Activated naive CD4-positive, alpha-beta T cell treated with anti-CD3 and anti-CD28 coated beads for 36 hours (primary cell): ENCODE measurements at regions of chrX and their contacts with region 1.

Region 1: DNA sequence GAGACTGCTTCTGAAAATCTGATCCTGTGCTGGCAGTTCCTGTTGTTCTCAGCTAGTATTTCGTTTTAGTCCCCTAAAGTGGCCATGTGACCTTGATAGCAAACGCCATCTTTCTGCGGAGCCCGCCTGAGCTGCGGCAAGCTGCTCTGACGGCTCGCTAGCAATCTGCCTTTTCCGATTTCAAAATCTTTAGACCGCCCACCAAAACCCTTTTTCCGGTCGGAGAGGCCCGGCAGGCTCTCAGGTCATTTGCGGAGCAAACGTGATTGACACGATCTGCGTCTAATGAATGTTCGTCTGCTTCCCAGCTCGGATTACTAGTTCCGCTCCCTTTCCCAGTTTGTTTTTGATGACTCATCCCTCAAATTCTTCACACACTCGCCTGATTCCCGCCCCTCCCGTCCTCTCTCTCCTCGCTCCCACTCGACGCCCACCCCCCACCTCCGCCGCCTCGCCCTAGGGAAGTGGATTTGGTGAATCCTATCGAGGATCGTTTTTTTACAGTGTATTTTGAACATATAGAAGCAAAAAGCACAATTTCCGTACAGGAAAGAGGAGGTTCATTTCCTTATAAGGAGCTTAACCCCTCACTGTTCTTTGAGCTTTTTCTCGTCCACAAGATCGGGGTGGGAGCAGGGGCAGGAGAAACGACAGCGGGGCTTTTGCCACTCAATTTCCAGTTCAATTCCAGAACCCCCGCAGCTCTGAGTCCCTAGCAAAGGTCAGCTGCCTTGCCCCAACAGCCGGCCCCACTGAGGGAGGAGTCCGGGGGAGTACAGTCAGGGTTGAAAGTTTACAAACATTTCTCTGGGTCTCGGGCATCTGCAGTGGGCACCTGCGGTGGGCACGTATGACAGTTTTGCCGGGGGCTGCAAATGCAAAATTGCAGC is 37.5 kb downstream of the NLGN3 start:
- DNase-seq: peak; percentile 91
- H3K4me3 Mint-ChIP-seq: peak overlapping the region; percentile 90
- H3K27ac Mint-ChIP-seq: peak overlapping the region; percentile 99
- H3K4me1 Mint-ChIP-seq: peaks cover 18% of the 10 kb centered on the region
- H3K27me3 Mint-ChIP-seq: no peaks in the 10 kb centered on the region

Region 2: DNA sequence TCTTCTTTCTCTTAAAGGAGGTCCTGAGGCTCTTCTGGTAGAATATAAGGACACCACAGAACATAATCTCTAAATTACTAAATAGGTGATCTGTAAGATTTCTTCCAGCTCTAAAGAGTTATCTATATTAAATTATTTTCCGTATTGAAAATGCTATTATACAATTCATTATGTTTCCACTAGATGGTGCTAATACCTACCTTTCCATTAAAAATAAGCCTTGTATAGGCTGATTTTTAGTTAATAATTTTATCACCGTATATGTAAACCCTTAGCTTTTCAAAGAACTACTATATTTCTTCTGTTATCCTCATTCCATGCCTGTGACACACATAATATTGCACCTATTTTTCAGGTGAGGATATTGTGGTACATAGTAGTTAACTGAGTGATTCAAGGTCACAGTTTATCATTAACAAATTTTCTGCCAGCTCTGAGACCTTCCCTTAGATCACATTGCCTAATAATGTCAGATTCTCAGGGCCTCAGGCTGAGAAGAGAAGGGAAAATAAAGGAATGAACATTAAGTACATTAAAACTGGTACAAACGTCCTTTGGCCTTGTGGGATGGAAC is 412.4 kb before region 1 on chrX:
- CTCF ChIA-PET with region 1: no interaction called
- intact Hi-C with region 1: loop called (anchors 2 kb)
- DNase-seq: no peak
- H3K4me3 Mint-ChIP-seq: no peak overlapping the region
- H3K27ac Mint-ChIP-seq: no peak overlapping the region
- H3K4me1 Mint-ChIP-seq: no peaks in the 10 kb centered on the region
- H3K27me3 Mint-ChIP-seq: no peaks in the 10 kb centered on the region

Region 3: GRCh38 chrX:70998411-70999027 is 183.6 kb before region 1 on chrX:
- CTCF ChIA-PET with region 1: no interaction called
- intact Hi-C with region 1: loop called (anchors 1 kb)
- DNase-seq: peak; percentile 45
- H3K4me3 Mint-ChIP-seq: no peak overlapping the region
- H3K27ac Mint-ChIP-seq: no peak overlapping the region
- H3K4me1 Mint-ChIP-seq: peaks cover 15% of the 10 kb centered on the region
- H3K27me3 Mint-ChIP-seq: no peaks in the 10 kb centered on the region

Region 4: GRCh38 chrX:71095543-71095911 is 86.6 kb before region 1 on chrX and contains the start of gene FOXO4:
- CTCF ChIA-PET with region 1: interaction called, 5 read pairs
- intact Hi-C with region 1: loop called (anchors 1 kb)
- DNase-seq: peak; percentile 91
- H3K4me3 Mint-ChIP-seq: peak within 1 kb of the TSS; percentile 82
- H3K27ac Mint-ChIP-seq: peak within 1 kb of the TSS; percentile 72
- H3K4me1 Mint-ChIP-seq: peaks cover 30% of the 10 kb centered on the region
- H3K27me3 Mint-ChIP-seq: no peaks in the 10 kb centered on the region
- total RNA-seq, gene FOXO4: 7.9 to 8.9 TPM

Region 5: GRCh38 chrX:71198066-71198465 is 15.9 kb after region 1 on chrX:
- CTCF ChIA-PET with region 1: interaction called, 9 read pairs
- intact Hi-C with region 1: loop called (anchors 1 kb)
- DNase-seq: peak; percentile 45
- H3K4me3 Mint-ChIP-seq: peak overlapping the region; percentile 91
- H3K27ac Mint-ChIP-seq: peak overlapping the region; percentile 93
- H3K4me1 Mint-ChIP-seq: peaks cover 7% of the 10 kb centered on the region
- H3K27me3 Mint-ChIP-seq: no peaks in the 10 kb centered on the region

Region 6: DNA sequence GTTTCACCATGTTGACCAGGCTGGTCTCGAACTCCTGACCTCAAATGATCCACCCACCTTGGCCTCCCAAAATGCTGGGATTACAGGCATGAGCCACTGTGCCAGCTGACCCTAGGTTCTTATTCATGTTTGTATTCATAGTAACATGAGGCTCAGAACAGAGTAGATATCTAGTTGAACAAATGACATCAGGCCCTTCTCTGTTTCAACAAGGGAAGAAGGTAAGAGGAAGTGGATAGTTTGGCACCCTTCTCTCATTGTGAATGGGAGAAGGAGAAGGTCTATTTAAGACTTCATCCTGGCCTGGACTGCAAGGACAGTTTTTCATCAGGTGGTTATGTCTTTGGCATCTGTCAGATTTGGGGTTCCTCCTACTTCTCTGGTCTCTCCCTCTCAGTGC is 54.7 kb after region 1 on chrX:
- CTCF ChIA-PET with region 1: no interaction called
- intact Hi-C with region 1: no loop called
- DNase-seq: no peak
- H3K4me3 Mint-ChIP-seq: no peak overlapping the region
- H3K27ac Mint-ChIP-seq: no peak overlapping the region
- H3K4me1 Mint-ChIP-seq: no peaks in the 10 kb centered on the region
- H3K27me3 Mint-ChIP-seq: no peaks in the 10 kb centered on the region

Region 7: DNA sequence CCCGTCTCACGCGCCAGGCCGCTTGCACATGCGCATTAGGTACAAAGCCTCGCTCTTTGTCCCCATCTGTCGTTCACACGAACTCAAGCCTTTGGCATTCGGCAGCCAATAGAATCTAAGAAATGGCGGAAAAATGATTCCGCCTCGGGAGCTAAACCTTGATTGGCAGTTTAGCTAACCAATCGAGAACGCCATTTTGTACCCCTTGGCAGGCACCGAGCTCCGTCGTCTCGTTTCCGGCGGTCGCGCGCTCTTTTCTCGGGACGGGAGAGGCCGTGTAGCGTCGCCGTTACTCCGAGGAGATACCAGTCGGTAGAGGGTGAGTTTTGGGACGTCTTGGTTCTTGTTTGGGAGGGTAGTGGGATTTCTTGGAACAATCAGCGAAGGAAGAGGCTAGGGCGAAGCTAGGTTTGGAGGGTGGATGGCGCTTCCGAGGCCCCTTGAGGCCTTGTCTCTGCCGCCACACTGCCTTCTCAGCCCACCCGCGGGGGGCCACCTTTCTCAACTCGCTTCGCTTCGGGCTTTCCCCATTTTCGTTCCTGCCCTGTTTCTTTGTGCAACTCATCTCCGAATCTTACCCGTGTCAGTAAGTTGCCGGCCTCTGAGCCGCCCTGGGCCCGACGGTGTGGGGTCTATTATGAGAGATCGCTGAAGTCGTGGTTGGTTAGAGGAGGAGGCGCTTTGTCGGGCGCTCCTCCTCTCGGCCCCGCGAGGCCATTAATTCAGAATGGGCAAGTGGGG is 101.4 kb after region 1 on chrX and contains the start of gene NONO:
- CTCF ChIA-PET with region 1: interaction called, 3 read pairs
- intact Hi-C with region 1: loop called (anchors 1 kb)
- DNase-seq: peak; percentile 91
- H3K4me3 Mint-ChIP-seq: peak within 1 kb of the TSS; percentile 88
- H3K27ac Mint-ChIP-seq: peak within 1 kb of the TSS; percentile 97
- H3K4me1 Mint-ChIP-seq: peaks cover 8% of the 10 kb centered on the region
- H3K27me3 Mint-ChIP-seq: no peaks in the 10 kb centered on the region
- total RNA-seq, gene NONO: 490 to 531 TPM

Region 8: GRCh38 chrX:71532753-71533425 is 350.7 kb after region 1 on chrX and contains the start of gene OGT:
- CTCF ChIA-PET with region 1: no interaction called
- intact Hi-C with region 1: loop called (anchors 5 kb)
- DNase-seq: peak; percentile 96
- H3K4me3 Mint-ChIP-seq: peak within 1 kb of the TSS; percentile 96
- H3K27ac Mint-ChIP-seq: peak within 1 kb of the TSS; percentile 98
- H3K4me1 Mint-ChIP-seq: peaks cover 30% of the 10 kb centered on the region
- H3K27me3 Mint-ChIP-seq: no peaks in the 10 kb centered on the region
- total RNA-seq, gene OGT: 307 to 323 TPM